Activated CD4-positive, alpha-beta memory T cell treated with anti-CD3 and anti-CD28 coated beads for 36 hours (primary cell): ENCODE measurements at regions of chr7 and their contacts with region 1.

Region 1: GRCh38 chr7:7968543-7969305 is at the start of gene GLCCI1:
- DNase-seq: peak; percentile 98
- H3K4me3 Mint-ChIP-seq: peak within 1 kb of the TSS; percentile 85
- H3K27ac Mint-ChIP-seq: peak within 1 kb of the TSS; percentile 83
- H3K4me1 Mint-ChIP-seq: peaks cover 17% of the 10 kb centered on the region
- H3K27me3 Mint-ChIP-seq: no peaks in the 10 kb centered on the region
- total RNA-seq, gene GLCCI1: 8.6 to 11.5 TPM

Region 2: DNA sequence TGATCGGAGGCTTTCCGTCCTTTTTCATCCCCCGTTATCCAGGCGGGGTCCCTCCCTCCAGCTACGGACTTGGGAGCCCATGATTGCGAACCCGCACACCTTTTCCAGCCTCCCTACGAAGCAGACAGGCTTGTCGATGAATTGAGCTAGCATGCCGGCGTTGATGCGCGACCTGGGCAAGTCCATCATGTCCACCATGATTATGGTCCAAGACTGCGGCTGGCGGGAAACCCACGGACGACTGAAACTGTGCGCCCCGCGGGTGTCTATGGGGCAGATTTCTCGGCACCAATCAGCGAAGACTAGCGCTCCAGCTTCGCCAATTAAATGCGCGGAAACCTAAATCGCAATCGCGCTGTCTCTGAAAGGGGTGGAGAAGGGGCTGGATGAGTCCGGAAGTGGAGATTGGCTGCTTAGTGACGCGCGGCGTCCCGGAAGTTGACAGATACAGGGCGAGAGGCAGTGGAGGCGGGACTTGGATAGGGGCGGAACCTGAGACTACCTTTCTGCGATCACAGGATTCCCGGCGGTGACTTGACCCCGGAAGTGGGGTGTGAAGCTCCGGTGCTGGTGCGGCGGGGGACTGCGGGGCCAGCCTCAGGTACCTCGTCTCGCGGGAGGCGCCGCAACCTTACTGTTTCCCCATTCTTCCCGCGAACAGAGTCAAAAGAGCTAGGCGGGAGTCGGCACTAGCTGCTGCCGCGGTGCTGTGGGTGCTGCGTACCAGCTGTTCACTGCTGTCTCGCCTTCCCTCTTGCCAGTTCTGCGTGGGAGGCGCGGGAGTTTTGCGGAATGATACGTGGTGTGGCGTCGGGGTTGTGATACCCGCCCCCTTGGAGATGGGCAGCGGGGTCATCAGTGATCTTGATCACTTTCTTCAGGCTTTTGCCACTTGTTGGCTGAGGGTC is 328.2 kb before region 1 on chr7 and contains the start of gene UMAD1:
- CTCF ChIA-PET with region 1: no interaction called
- POLR2A ChIA-PET with region 1: interaction called, 25 read pairs
- intact Hi-C with region 1: loop called (anchors 2 kb)
- DNase-seq: peak; percentile 99
- H3K4me3 Mint-ChIP-seq: peak within 1 kb of the TSS; percentile 97
- H3K27ac Mint-ChIP-seq: peak within 1 kb of the TSS; percentile 100
- H3K4me1 Mint-ChIP-seq: peaks cover 45% of the 10 kb centered on the region
- H3K27me3 Mint-ChIP-seq: peaks cover 1% of the 10 kb centered on the region
- total RNA-seq, gene UMAD1: 15.0 to 17.6 TPM

Region 3: GRCh38 chr7:7719236-7719635 is 249.5 kb before region 1 on chr7:
- CTCF ChIA-PET with region 1: no interaction called
- POLR2A ChIA-PET with region 1: no interaction called
- intact Hi-C with region 1: loop called (anchors 1 kb)
- DNase-seq: peak; percentile 62
- H3K4me3 Mint-ChIP-seq: peak overlapping the region; percentile 8
- H3K27ac Mint-ChIP-seq: peak overlapping the region; percentile 45
- H3K4me1 Mint-ChIP-seq: peaks cover 17% of the 10 kb centered on the region
- H3K27me3 Mint-ChIP-seq: no peaks in the 10 kb centered on the region

Region 4: DNA sequence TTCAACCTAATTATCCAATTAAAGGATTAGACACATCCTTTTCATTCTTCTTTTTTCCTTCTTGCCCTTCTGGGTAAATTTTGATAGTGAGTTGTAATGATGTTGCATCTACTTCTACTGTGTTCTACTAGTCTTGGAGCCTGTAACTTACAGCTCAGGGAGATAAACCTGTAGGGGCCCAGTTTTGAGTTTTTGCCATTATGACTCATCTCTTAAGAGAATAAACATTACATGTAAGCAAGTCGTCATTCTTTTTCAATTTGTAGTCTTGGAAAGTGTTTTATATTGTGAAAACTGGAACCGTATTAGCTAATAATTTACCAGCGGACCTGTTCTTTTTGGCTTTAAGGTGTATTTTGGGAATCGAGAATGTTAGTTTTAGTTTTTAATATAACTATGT is 160.6 kb before region 1 on chr7:
- CTCF ChIA-PET with region 1: no interaction called
- POLR2A ChIA-PET with region 1: no interaction called
- intact Hi-C with region 1: no loop called
- DNase-seq: no peak
- H3K4me3 Mint-ChIP-seq: no peak overlapping the region
- H3K27ac Mint-ChIP-seq: no peak overlapping the region
- H3K4me1 Mint-ChIP-seq: no peaks in the 10 kb centered on the region
- H3K27me3 Mint-ChIP-seq: no peaks in the 10 kb centered on the region

Region 5: GRCh38 chr7:7920481-7920880 is 48.2 kb before region 1 on chr7:
- CTCF ChIA-PET with region 1: interaction called, 8 read pairs
- POLR2A ChIA-PET with region 1: interaction called, 6 read pairs
- intact Hi-C with region 1: loop called (anchors 1 kb)
- DNase-seq: peak; percentile 32
- H3K4me3 Mint-ChIP-seq: peak overlapping the region; percentile 55
- H3K27ac Mint-ChIP-seq: no peak overlapping the region
- H3K4me1 Mint-ChIP-seq: peaks cover 41% of the 10 kb centered on the region
- H3K27me3 Mint-ChIP-seq: no peaks in the 10 kb centered on the region

Region 6: DNA sequence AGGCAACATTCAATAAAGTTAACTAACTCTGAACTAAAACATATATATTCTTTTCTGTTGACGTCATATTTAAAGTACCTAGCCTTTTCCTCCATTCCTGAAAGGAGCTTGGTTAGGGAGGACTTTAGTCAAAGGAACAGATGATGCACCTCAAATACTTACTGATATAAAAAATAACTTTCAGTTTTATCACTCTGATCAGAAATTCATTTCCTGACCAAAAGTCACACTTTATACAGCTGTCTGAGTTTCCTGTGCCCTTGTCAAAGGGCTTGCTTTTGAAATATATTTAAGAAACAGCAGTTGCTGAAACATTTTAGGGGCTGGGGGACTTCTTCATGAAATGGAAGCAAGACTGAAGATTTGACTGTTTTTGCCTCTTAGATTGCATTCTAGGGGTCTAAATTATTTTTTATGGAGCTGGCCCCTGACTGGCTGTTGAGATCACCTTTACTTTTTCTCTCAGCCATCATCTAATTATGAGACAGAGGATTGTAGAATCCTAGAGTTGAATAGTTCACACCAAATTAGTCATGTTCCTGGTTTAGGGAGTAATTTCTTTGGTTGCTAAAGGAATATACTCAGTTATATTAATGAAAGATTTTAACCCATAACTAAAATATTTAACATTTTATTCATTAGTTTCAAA is 46.5 kb after region 1 on chr7:
- CTCF ChIA-PET with region 1: no interaction called
- POLR2A ChIA-PET with region 1: no interaction called
- intact Hi-C with region 1: loop called (anchors 2 kb)
- DNase-seq: no peak
- H3K4me3 Mint-ChIP-seq: no peak overlapping the region
- H3K27ac Mint-ChIP-seq: peak overlapping the region; percentile 56
- H3K4me1 Mint-ChIP-seq: peaks cover 40% of the 10 kb centered on the region
- H3K27me3 Mint-ChIP-seq: no peaks in the 10 kb centered on the region

Region 7: GRCh38 chr7:8134089-8134733 is 165.5 kb after region 1 on chr7:
- CTCF ChIA-PET with region 1: interaction called, 3 read pairs
- POLR2A ChIA-PET with region 1: interaction called, 4 read pairs
- intact Hi-C with region 1: loop called (anchors 2 kb)
- DNase-seq: peak; percentile 66
- H3K4me3 Mint-ChIP-seq: peak overlapping the region; percentile 35
- H3K27ac Mint-ChIP-seq: peak overlapping the region; percentile 71
- H3K4me1 Mint-ChIP-seq: peaks cover 60% of the 10 kb centered on the region
- H3K27me3 Mint-ChIP-seq: no peaks in the 10 kb centered on the region

Region 8: DNA sequence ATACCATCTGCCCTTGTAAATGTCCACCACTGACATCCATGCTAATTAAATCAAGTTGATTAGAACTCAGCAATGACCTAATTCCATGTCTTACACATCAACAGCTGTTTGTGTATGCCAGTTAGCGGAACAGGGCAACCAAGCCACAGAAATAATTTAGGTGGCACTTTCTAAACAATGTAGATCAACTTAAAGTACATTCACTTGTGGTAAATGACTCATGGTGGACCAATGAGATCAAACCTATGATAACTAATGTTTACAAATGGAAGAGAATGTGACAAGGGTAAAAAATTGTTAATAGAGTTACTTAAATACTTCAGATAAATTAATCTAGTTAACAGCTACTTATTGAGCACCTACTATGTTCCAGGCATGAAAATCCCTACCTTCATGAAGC is 356.3 kb after region 1 on chr7:
- CTCF ChIA-PET with region 1: no interaction called
- POLR2A ChIA-PET with region 1: no interaction called
- intact Hi-C with region 1: no loop called
- DNase-seq: no peak
- H3K4me3 Mint-ChIP-seq: no peak overlapping the region
- H3K27ac Mint-ChIP-seq: no peak overlapping the region
- H3K4me1 Mint-ChIP-seq: no peaks in the 10 kb centered on the region
- H3K27me3 Mint-ChIP-seq: peaks cover 10% of the 10 kb centered on the region